IMR-90 (cell line): ENCODE measurements at regions of chr5 and their contacts with region 1.

Region 1: DNA sequence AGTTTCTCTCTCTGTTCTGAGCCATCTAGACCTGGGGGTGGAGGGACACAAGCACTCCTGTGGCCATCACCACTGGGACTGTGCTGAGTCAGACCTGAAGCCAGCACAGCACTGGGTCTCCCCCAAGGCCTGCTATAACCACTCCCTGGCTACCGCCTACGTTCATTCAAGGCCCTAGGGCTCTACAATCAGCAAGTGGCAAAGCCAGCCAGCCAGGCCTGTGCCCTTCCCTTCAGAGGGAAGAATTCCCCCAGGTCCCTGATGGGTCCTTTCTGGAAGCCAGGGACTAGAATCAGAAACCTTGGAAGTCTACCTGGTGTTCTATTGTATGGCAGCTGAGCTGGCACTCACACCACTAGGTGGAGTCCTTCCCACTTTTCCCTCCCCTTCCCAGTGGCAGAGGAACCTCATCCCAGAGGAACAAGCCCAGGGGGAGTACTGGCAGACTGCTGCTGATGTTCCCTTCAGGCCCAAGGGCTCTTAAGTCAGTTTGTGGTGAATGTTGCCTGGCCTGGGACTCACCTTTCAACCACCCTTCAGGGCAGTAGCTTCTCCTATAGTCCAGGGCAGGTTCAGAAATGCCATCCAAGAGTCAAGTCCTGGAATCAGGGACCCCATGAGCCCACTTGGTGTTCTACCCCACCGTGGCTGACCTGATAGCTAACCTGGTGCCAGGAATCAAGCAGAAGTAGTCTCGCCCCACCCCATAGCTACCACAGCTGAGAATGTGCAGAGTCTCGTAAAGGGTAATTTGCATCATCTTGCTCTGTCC is 20.0 kb downstream of the JMY start:
- DNase-seq: peak; percentile 46
- ATAC-seq: peak; percentile 89
- H3K4me3 ChIP-seq: no peak overlapping the region
- H3K27ac ChIP-seq: no peak overlapping the region
- H3K4me1 ChIP-seq: no peaks in the 10 kb centered on the region
- H3K27me3 ChIP-seq: no peaks in the 10 kb centered on the region
- CTCF ChIP-seq: peak; percentile 58
- POLR2A ChIP-seq: no peak
- RAD21 ChIP-seq: peak; percentile 66

Region 2: DNA sequence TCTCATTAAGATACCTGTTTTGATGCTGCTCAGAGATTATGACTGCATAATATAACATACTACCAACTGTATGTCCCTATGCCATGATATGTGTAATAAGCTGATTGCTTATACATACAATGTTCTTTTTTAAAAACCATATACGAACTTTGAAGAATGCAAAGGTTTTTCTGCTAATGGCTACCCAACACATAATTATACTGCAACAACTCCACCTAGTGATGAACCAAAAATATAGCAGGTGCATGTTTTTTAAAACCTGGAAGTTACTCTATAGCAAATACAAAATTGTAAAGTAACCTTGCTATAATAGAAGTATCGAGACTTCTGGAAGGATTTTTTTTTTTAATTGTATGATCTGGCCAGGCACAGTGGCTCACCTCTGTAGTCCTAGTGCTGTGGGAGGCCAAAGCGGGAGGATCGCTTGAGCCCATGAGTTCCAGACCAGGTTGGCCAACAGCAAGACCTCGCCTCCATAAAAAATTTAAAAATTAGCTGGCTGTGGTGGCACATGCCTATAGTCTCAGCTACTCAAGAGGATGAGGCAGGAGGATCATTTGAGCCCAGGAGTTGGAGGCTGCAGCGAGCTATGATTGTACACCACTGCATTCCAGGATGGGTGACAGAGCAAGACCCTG is 208.8 kb after region 1 on chr5:
- CTCF ChIA-PET with region 1: interaction called, 4 read pairs
- POLR2A ChIA-PET with region 1: no interaction called
- dilution Hi-C with region 1: no loop called
- in situ Hi-C with region 1: loop called (anchors 5 kb)
- intact Hi-C with region 1: loop called (anchors 1 kb)
- DNase-seq: peak; percentile 53
- ATAC-seq: peak; percentile 86
- H3K4me3 ChIP-seq: no peak overlapping the region
- H3K27ac ChIP-seq: no peak overlapping the region
- H3K4me1 ChIP-seq: no peaks in the 10 kb centered on the region
- H3K27me3 ChIP-seq: no peaks in the 10 kb centered on the region
- CTCF ChIP-seq: peak; percentile 76
- POLR2A ChIP-seq: no peak
- RAD21 ChIP-seq: peak; percentile 75

Region 3: GRCh38 chr5:79736528-79737514 is 480.8 kb after region 1 on chr5:
- CTCF ChIA-PET with region 1: no interaction called
- POLR2A ChIA-PET with region 1: no interaction called
- dilution Hi-C with region 1: no loop called
- in situ Hi-C with region 1: no loop called
- intact Hi-C with region 1: no loop called
- DNase-seq: no peak
- ATAC-seq: no peak
- H3K4me3 ChIP-seq: no peak overlapping the region
- H3K27ac ChIP-seq: no peak overlapping the region
- H3K4me1 ChIP-seq: no peaks in the 10 kb centered on the region
- H3K27me3 ChIP-seq: peaks cover 12% of the 10 kb centered on the region
- CTCF ChIP-seq: no peak
- POLR2A ChIP-seq: no peak
- RAD21 ChIP-seq: no peak